ENCODE measurements at regions of chr2 and their contacts with region 1.

Region 1: DNA sequence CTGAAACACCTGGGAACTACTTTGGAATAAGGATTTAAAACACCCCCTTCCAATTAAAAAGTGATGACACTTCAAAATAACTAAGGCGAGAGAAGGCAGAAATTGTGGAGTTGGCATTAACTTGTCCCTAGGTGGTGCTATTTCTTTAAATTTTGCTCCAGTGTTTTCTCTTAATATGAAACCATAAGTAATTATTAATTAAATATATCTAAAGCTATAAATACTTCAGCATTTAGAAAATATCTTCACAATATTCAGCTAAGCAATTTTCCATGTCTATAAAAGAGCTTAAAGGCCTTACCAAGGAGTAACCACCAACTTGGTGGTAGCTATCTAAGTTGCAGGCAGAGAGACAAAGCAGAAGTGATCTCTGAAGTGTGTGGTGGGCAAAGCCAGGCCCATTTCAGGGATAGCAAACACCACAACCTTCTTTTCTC is 186.8 kb upstream of the PGAP1 start:
- DNase-seq: no peak
- ATAC-seq: peak in 2 of 8 donors; percentile 43 to 58
- H3K4me3 ChIP-seq: no peak overlapping the region
- H3K27ac ChIP-seq: no peak overlapping the region
- H3K4me1 ChIP-seq: peaks cover 6 to 21% (median 13%) of the 10 kb centered on the region in 9 donors
- H3K27me3 ChIP-seq: no peaks in the 10 kb centered on the region
- CTCF ChIP-seq: peak; percentile 41 to 86 (median 72)

Region 2: GRCh38 chr2:196926562-196927375 is 186.5 kb before region 1 on chr2 and contains the start of gene PGAP1:
- intact Hi-C with region 1: loop called in 1 of 10 experiments (anchors 10 kb)
- DNase-seq: peak; percentile 89 to 92
- ATAC-seq: peak; percentile 97 to 100 (median 98)
- H3K4me3 ChIP-seq: peak within 1 kb of the TSS; percentile 69 to 93 (median 84)
- H3K27ac ChIP-seq: peak within 1 kb of the TSS; percentile 25 to 93 (median 88)
- H3K4me1 ChIP-seq: peaks cover 0 to 34% (median 13%) of the 10 kb centered on the region in 9 donors
- H3K27me3 ChIP-seq: no peaks in the 10 kb centered on the region
- CTCF ChIP-seq: no peak
- total RNA-seq, gene PGAP1: 4.8 to 9.8 (median 5.8) TPM

Region 3: DNA sequence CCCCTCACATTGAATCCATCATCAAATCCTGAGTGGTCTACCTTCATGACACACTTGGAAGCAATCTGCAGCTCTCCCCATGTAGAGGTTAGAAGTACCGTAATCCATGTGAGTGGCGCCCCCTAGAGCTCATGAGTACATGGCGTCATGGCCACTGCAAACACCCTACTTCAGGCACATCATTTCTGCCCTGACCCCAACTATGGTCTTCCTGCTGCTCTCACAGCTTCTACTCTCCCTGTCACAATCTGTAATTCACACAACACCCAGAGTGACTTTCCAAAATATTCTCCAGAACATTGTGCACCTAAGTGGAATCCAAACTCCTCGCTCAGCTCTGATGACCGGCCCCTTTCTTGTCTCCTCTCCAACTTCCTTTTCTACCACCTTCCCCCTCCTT is 55.4 kb after region 1 on chr2:
- intact Hi-C with region 1: loop called in 3 of 10 experiments (anchors 5 to 10 kb)
- DNase-seq: peak; percentile 40 to 46
- ATAC-seq: peak in 6 of 8 donors; percentile 43 to 75 (median 64)
- H3K4me3 ChIP-seq: no peak overlapping the region
- H3K27ac ChIP-seq: no peak overlapping the region
- H3K4me1 ChIP-seq: peaks cover 0 to 22% (median 8%) of the 10 kb centered on the region in 9 donors
- H3K27me3 ChIP-seq: no peaks in the 10 kb centered on the region
- CTCF ChIP-seq: peak; percentile 21 to 71 (median 54)

Region 4: GRCh38 chr2:197184959-197185586 is 71.8 kb after region 1 on chr2:
- intact Hi-C with region 1: loop called in 2 of 10 experiments (anchors 5 kb)
- DNase-seq: peak; percentile 87 to 89
- ATAC-seq: peak; percentile 81 to 99 (median 93)
- H3K4me3 ChIP-seq: no peak overlapping the region
- H3K27ac ChIP-seq: peak overlapping the region in 8 of 10 donors; percentile 3 to 70 (median 51)
- H3K4me1 ChIP-seq: peaks cover 0 to 27% (median 18%) of the 10 kb centered on the region in 9 donors
- H3K27me3 ChIP-seq: no peaks in the 10 kb centered on the region
- CTCF ChIP-seq: no peak

Region 5: GRCh38 chr2:197191177-197191939 is 78.1 kb after region 1 on chr2:
- intact Hi-C with region 1: loop called in 1 of 10 experiments (anchors 1 kb)
- DNase-seq: no peak
- ATAC-seq: peak in 1 of 8 donors; percentile 50
- H3K4me3 ChIP-seq: no peak overlapping the region
- H3K27ac ChIP-seq: no peak overlapping the region
- H3K4me1 ChIP-seq: peaks cover 0 to 35% (median 14%) of the 10 kb centered on the region in 9 donors
- H3K27me3 ChIP-seq: no peaks in the 10 kb centered on the region
- CTCF ChIP-seq: peak; percentile 45 to 79 (median 74)

Region 6: GRCh38 chr2:197310271-197310985 is 197.1 kb after region 1 on chr2 and contains the start of gene ANKRD44:
- intact Hi-C with region 1: loop called in 9 of 10 experiments (anchors 2 to 10 kb)
- DNase-seq: peak; percentile 90 to 93
- ATAC-seq: peak; percentile 97 to 98 (median 98)
- H3K4me3 ChIP-seq: peak within 1 kb of the TSS; percentile 27 to 84 (median 74)
- H3K27ac ChIP-seq: peak within 1 kb of the TSS; percentile 44 to 92 (median 68)
- H3K4me1 ChIP-seq: peaks cover 0 to 50% (median 22%) of the 10 kb centered on the region in 9 donors
- H3K27me3 ChIP-seq: no peaks in the 10 kb centered on the region
- CTCF ChIP-seq: peak in 8 of 9 donors; percentile 16 to 60 (median 42)
- total RNA-seq, gene ANKRD44: 4.2 to 20.1 (median 7.3) TPM

Region 7: DNA sequence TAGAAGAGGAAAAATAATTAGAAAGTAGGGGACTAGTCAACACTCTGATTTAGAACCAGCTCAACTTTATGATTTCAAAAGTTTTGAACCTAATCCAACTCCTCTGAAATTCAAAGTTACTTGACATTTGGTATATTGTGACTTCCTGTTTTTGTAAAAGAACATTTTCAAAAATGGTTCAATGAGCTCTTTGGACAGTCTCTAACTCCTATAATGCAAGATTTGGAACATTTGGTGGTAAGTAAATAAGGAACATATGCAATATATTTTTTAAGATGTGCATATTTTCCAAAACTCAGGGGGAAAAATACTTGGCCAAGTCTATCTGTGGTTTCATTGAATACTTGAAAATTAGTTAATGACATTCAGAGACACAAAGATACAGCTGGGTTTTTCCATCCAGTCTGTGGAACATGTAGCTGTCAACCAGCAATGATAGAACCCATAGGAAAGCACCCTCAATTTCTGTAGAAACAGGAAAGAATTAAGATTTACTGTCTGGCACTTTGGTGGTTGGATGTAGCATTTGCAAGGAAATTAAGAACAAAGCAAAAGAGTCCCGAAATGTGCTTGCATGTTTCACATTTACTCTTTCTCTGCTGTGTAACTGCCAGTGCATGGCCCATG is 214.3 kb after region 1 on chr2:
- intact Hi-C with region 1: no loop called
- DNase-seq: no peak
- ATAC-seq: no peak
- H3K4me3 ChIP-seq: no peak overlapping the region
- H3K27ac ChIP-seq: no peak overlapping the region
- H3K4me1 ChIP-seq: peaks cover 0 to 12% (median 0%) of the 10 kb centered on the region in 9 donors
- H3K27me3 ChIP-seq: peaks cover 0 to 5% (median 0%) of the 10 kb centered on the region in 7 donors
- CTCF ChIP-seq: no peak

Region 8: DNA sequence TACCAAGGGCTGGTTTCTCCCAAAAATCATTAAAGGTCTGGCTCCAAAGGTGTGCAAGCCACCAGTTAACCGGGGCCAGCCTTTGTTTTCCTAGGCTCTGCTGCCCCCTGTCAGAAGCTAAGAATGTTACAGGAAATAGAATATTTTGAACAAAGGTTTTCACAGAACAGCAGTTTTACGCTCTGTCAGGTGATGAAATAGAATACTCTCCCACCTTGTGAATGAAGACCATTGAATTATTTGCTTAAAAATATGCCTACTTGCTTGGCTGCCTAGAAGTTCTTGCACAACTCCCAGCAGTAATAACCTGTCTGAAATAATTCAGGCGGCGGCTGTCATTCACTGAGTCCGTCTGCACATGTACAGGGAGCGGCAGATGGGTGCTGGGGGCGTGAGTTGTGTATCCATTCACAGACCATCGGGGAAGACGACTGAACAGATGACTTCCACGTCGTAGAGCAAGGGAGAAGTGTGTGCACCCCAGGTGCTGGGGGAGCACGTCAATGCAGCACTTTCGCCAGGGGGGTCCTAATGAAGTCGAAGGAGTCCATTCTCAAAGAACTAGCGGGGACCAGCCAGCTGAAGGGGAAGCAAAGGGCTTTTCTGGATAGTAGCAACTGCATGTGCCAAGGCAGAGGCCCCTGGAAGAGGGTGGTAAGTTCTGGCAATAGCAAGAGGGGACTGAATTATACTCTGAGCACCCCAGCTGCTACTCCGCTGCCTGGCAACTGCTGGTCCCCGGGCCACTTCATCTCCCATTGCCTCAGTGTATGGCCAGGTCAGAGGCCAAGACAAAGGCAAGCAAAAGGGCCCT is 265.4 kb after region 1 on chr2:
- intact Hi-C with region 1: loop called (anchors 1 to 5 kb)
- DNase-seq: peak in 1 of 2 donors; percentile 43
- ATAC-seq: peak in 7 of 8 donors; percentile 52 to 77 (median 69)
- H3K4me3 ChIP-seq: no peak overlapping the region
- H3K27ac ChIP-seq: no peak overlapping the region
- H3K4me1 ChIP-seq: peaks cover 0 to 6% (median 0%) of the 10 kb centered on the region in 9 donors
- H3K27me3 ChIP-seq: no peaks in the 10 kb centered on the region
- CTCF ChIP-seq: peak; percentile 51 to 90 (median 76)

Region 9: DNA sequence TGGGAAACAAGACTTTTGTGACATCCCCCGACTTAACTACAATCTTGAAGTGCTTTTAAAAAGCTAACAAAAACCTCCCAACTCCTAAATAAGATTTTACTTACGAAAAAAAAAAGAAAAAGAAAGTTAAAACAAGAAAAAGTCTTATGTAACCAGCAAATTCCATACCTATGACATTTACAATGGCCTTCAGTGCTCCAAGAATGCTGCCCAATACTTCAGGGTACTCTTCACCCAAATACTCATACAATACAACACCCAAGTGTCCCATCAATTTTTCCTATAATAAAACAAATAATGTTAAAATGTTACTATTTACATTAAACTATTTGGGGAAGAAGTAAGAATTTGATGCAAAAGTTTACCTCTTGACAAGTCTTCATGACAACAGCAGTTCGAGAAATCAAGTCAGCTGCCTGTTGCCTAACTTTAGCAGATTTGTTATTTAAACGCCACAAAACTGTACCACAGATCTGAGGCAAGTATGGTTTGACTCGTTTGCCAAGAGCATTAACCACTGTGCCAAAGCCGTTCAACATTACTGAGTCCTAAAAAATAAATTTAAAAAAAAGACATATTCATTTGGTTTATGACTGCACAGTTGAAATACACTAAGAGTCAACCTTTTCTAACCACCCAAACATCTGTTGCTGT is 286.7 kb after region 1 on chr2:
- intact Hi-C with region 1: no loop called
- DNase-seq: no peak
- ATAC-seq: no peak
- H3K4me3 ChIP-seq: no peak overlapping the region
- H3K27ac ChIP-seq: no peak overlapping the region
- H3K4me1 ChIP-seq: no peaks in the 10 kb centered on the region
- H3K27me3 ChIP-seq: no peaks in the 10 kb centered on the region
- CTCF ChIP-seq: no peak